CD4-positive, alpha-beta memory T cell (primary cell): ENCODE measurements at regions of chr18 and their contacts with region 1.

Region 1: DNA sequence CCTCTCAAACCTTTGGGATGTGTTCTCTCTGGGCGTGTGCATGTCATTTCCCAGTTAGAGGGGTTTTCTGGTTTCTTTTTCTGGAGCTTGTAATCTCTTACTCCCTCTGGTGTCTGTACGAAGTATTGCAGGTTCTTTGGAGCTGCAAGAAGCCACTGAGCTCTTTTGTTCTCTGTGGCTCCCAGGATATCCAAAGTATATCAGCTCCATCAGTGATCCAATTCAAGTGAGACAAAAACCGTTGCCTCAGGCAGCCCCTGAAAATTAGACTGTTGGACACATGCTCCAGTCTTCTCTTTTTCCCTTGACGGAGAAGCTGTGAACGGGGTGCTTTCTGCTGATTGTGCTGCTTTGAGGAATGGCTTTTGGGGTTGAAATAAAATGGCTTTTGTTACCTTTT is 59.0 kb upstream of the LDLRAD4 start:
- DNase-seq: peak in 4 of 5 donors; percentile 48 to 58 (median 56)
- H3K4me3 ChIP-seq: no peak overlapping the region
- H3K4me3 Mint-ChIP-seq: peak overlapping the region in 2 of 8 donors; percentile 23 to 43
- H3K27ac ChIP-seq: no peak overlapping the region
- H3K27ac Mint-ChIP-seq: no peak overlapping the region
- H3K4me1 ChIP-seq: no peaks in the 10 kb centered on the region
- H3K4me1 Mint-ChIP-seq: peaks cover 0 to 5% (median 2%) of the 10 kb centered on the region in 4 donors
- H3K27me3 ChIP-seq: no peaks in the 10 kb centered on the region
- H3K27me3 Mint-ChIP-seq: peaks cover 2 to 3% of the 10 kb centered on the region in 2 donors

Region 2: DNA sequence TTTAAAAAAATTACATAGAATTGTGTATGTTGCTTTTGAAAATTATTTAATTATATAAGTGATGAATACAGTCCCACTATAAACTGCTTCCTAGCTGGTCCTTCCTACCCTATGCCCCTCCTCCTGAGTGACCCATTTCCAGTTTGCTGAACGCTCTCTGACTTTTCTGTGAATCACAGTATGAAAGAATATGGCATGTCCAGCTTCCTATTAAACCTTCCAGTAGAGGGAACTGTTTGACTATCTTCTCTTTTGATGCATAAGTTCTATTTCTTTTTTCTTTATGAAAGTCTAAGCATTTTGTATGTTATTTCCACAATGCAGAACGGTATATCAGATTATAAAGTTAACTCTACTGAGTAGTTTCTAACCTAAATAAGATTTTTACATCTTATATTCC is 415.5 kb before region 1 on chr18:
- CTCF ChIA-PET with region 1: interaction called, 11 read pairs
- POLR2A ChIA-PET with region 1: no interaction called
- intact Hi-C with region 1: no loop called
- DNase-seq: peak in 4 of 5 donors; percentile 33 to 43 (median 36)
- H3K4me3 ChIP-seq: no peak overlapping the region
- H3K4me3 Mint-ChIP-seq: no peak overlapping the region
- H3K27ac ChIP-seq: no peak overlapping the region
- H3K27ac Mint-ChIP-seq: no peak overlapping the region
- H3K4me1 ChIP-seq: no peaks in the 10 kb centered on the region
- H3K4me1 Mint-ChIP-seq: peaks cover 0 to 2% (median 0%) of the 10 kb centered on the region in 4 donors
- H3K27me3 ChIP-seq: no peaks in the 10 kb centered on the region
- H3K27me3 Mint-ChIP-seq: no peaks in the 10 kb centered on the region

Region 3: GRCh38 chr18:13112982-13113381 is 46.6 kb before region 1 on chr18:
- CTCF ChIA-PET with region 1: interaction called, 17 read pairs
- POLR2A ChIA-PET with region 1: no interaction called
- intact Hi-C with region 1: no loop called
- DNase-seq: no peak
- H3K4me3 ChIP-seq: no peak overlapping the region
- H3K4me3 Mint-ChIP-seq: no peak overlapping the region
- H3K27ac ChIP-seq: no peak overlapping the region
- H3K27ac Mint-ChIP-seq: peak overlapping the region in 1 of 7 donors; percentile 19
- H3K4me1 ChIP-seq: no peaks in the 10 kb centered on the region
- H3K4me1 Mint-ChIP-seq: no peaks in the 10 kb centered on the region
- H3K27me3 ChIP-seq: no peaks in the 10 kb centered on the region
- H3K27me3 Mint-ChIP-seq: no peaks in the 10 kb centered on the region

Region 4: DNA sequence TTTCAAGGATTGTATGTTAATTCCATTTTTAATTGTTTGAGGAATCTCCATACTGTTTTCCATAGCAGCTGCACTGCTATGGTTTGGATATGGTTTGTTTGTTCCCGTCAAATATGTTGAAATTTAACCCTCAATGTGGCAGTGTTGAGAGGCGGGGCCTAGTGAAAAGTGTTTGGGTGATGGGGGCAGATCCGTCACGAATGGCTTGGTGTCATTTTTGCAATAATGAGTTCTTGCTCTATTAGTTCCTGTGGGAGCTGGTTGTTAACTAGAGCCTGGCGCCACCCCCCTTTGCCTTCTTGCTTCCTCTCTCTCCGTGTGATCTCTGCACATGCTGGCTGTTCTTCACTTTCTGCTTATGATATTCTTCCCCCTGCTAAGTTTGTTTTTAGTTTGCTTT is 12.4 kb before region 1 on chr18:
- CTCF ChIA-PET with region 1: interaction called, 12 read pairs
- POLR2A ChIA-PET with region 1: no interaction called
- intact Hi-C with region 1: no loop called
- DNase-seq: no peak
- H3K4me3 ChIP-seq: no peak overlapping the region
- H3K4me3 Mint-ChIP-seq: no peak overlapping the region
- H3K27ac ChIP-seq: no peak overlapping the region
- H3K27ac Mint-ChIP-seq: no peak overlapping the region
- H3K4me1 ChIP-seq: no peaks in the 10 kb centered on the region
- H3K4me1 Mint-ChIP-seq: no peaks in the 10 kb centered on the region
- H3K27me3 ChIP-seq: no peaks in the 10 kb centered on the region
- H3K27me3 Mint-ChIP-seq: peaks cover 2 to 7% of the 10 kb centered on the region in 2 donors

Region 5: DNA sequence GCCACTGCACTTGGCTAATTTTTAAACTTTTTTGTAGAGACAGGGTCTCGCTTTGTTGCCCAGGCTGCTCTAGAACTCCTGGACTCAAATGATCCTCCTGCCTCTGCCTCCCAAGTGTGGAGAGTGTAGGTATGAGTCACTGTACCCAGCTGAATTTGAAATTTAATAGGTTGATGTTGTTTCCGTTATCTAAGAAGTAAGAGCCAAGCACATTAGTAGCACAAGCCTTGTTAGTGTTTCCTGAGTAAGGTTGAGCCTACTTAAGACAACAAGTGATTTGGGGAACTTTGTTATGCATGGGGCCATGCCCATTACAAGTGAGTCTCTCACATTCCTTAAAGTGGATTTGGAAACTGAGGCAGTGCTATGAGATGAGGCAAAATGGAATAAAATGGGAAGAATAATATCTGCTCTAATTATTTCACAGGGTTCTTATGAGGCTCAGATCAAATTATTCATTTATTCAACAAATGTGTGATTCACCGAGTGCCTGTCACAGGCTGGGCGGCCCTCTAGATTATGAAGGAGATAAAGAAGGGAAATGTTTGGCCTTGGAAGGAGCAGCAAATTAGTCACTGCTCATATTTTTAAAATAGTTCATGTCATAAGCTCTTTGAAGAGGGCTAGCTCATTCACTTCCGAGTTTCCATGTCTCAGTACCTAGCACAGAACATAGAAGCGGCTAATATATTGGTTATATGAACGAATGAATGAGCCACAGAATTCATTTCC is 276.2 kb after region 1 on chr18:
- CTCF ChIA-PET with region 1: no interaction called
- POLR2A ChIA-PET with region 1: no interaction called
- intact Hi-C with region 1: no loop called
- DNase-seq: peak in 2 of 5 donors; percentile 15 to 53
- H3K4me3 ChIP-seq: no peak overlapping the region
- H3K4me3 Mint-ChIP-seq: peak overlapping the region in 5 of 8 donors; percentile 30 to 89 (median 67)
- H3K27ac ChIP-seq: no peak overlapping the region
- H3K27ac Mint-ChIP-seq: peak overlapping the region; percentile 79 to 97 (median 95)
- H3K4me1 ChIP-seq: peaks cover 50% of the 10 kb centered on the region
- H3K4me1 Mint-ChIP-seq: peaks cover 36 to 58% (median 50%) of the 10 kb centered on the region in 4 donors
- H3K27me3 ChIP-seq: no peaks in the 10 kb centered on the region
- H3K27me3 Mint-ChIP-seq: no peaks in the 10 kb centered on the region